Activated CD4-positive, alpha-beta T cell treated with anti-CD3 and anti-CD28 coated beads, Interleukin-2, amount 10 ng/mL, durations not matched to agents 24 days and 14 days (primary cell): ENCODE measurements at regions of chr19 and their contacts with region 1.

Region 1: GRCh38 chr19:48391107-48391986 is at the start of gene KDELR1:
- DNase-seq: peak; percentile 93
- H3K4me3 Mint-ChIP-seq: peak within 1 kb of the TSS; percentile 96
- H3K27ac Mint-ChIP-seq: peak within 1 kb of the TSS; percentile 97
- H3K4me1 Mint-ChIP-seq: peaks cover 20% of the 10 kb centered on the region
- H3K27me3 Mint-ChIP-seq: peaks cover 34% of the 10 kb centered on the region
- total RNA-seq, gene KDELR1: 75.5 and 77.7 TPM in 2 replicates

Region 2: DNA sequence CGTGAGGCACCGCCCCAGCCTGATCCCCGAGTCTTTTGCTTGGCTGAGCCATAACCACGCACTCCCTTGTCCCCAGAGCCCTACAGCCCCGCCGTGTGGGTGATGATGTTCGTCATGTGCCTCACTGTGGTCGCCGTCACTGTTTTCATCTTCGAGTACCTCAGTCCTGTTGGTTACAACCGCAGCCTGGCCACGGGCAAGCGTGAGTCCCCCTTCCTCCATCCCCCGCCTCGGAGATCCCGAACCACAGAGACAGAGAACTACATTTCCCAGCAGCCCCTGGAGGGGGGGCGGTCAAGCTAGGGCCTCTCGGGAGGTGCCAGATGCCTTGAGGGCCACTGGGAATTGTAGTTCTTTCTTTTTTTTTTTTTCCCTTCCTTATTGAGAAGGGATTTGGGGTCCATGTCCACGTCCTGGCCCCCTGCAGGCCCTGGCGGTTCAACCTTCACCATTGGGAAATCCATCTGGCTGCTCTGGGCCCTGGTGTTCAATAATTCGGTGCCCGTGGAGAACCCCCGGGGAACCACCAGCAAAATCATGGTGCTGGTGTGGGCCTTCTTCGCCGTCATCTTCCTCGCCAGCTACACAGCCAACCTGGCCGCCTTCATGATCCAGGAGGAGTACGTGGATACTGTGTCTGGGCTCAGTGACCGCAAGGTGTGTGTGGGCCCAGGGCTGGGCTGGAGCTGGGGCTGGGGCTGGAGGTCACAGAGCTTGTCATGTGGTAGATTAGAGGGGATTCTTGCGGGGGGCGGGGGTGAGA is 28.0 kb after region 1 on chr19:
- intact Hi-C with region 1: no loop called
- DNase-seq: peak; percentile 92
- H3K4me3 Mint-ChIP-seq: peak overlapping the region; percentile 59
- H3K27ac Mint-ChIP-seq: peak overlapping the region; percentile 83
- H3K4me1 Mint-ChIP-seq: peaks cover 24% of the 10 kb centered on the region
- H3K27me3 Mint-ChIP-seq: peaks cover 13% of the 10 kb centered on the region

Region 3: GRCh38 chr19:48445606-48446481 is 54.5 kb after region 1 on chr19 and contains the start of gene GRWD1:
- intact Hi-C with region 1: loop called (anchors 2 kb)
- DNase-seq: peak; percentile 98
- H3K4me3 Mint-ChIP-seq: peak within 1 kb of the TSS; percentile 96
- H3K27ac Mint-ChIP-seq: peak within 1 kb of the TSS; percentile 97
- H3K4me1 Mint-ChIP-seq: peaks cover 23% of the 10 kb centered on the region
- H3K27me3 Mint-ChIP-seq: peaks cover 25% of the 10 kb centered on the region
- total RNA-seq, gene GRWD1: 89.1 and 90.6 TPM in 2 replicates

Region 4: DNA sequence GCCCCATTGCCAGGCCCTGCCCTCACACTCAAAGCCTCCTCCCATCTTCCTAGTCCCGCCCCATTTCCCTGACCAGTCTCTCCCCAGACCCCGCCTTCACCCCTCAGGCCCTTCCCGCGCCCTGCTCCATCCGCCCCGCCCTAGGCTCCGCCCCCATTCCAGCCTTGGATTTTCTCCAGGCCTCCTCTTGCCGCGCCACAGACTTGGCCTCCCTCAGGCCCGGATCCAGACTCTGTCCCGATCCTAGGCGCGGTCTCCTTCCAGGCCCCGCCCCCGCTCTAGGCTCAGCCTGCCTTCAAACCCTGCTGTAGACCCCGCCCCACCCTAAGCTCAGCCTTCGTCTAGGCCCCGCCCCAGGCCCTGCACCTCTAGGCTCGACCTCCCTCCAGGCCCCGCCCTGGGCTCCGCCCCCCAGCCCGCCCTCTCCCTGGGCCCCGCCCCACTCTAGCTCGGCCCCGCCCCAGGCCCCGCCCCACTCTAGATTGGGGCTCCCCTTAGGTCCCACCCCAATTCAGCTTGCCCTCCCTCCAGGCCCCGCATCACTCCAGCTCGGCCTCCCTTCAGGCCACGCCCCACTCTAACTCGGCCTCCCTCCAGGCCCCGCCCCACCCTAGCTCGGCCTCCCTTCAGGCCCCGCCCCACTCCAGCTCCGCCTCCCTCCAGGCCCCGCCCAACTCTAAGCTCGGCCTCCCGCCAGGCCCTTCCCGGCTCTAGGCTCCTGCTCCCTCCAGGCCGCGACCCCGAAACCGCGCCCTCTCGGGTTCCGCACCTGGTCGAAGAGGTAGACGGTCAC is 101.8 kb after region 1 on chr19:
- intact Hi-C with region 1: loop called (anchors 5 kb)
- DNase-seq: peak; percentile 95
- H3K4me3 Mint-ChIP-seq: peak overlapping the region; percentile 83
- H3K27ac Mint-ChIP-seq: peak overlapping the region; percentile 65
- H3K4me1 Mint-ChIP-seq: peaks cover 30% of the 10 kb centered on the region
- H3K27me3 Mint-ChIP-seq: peaks cover 36% of the 10 kb centered on the region